Mammary epithelial cell (primary cell): ENCODE measurements at regions of chr18 and their contacts with region 1.

Region 1: DNA sequence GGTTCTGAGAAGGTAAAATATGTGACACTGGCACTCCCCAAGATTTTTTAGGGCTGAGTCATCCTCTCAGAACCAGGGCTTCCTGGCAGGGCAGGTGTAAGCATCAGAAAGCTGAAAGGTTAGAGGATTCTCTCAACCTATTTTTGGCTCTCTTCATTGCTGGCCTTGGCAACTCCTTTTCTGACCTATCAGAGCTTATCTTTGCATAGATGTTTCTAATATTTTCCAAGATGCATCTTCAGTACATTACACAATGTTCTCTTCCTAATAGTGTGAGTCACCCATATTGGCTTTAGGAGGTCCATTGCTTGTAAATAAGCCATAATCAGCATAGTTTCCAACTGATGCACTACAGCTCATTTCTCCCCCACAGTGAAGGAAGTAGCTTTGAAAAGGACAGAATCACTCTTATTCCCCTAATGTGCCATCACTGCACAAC is 2008.4 kb upstream of the PIK3C3 start:
- DNase-seq: peak; percentile 85
- H3K4me3 ChIP-seq: no peak overlapping the region
- H3K27ac ChIP-seq: peak overlapping the region; percentile 85
- H3K4me1 ChIP-seq: peaks cover 34% of the 10 kb centered on the region
- H3K27me3 ChIP-seq: no peaks in the 10 kb centered on the region
- CTCF ChIP-seq: no peak

Region 2: DNA sequence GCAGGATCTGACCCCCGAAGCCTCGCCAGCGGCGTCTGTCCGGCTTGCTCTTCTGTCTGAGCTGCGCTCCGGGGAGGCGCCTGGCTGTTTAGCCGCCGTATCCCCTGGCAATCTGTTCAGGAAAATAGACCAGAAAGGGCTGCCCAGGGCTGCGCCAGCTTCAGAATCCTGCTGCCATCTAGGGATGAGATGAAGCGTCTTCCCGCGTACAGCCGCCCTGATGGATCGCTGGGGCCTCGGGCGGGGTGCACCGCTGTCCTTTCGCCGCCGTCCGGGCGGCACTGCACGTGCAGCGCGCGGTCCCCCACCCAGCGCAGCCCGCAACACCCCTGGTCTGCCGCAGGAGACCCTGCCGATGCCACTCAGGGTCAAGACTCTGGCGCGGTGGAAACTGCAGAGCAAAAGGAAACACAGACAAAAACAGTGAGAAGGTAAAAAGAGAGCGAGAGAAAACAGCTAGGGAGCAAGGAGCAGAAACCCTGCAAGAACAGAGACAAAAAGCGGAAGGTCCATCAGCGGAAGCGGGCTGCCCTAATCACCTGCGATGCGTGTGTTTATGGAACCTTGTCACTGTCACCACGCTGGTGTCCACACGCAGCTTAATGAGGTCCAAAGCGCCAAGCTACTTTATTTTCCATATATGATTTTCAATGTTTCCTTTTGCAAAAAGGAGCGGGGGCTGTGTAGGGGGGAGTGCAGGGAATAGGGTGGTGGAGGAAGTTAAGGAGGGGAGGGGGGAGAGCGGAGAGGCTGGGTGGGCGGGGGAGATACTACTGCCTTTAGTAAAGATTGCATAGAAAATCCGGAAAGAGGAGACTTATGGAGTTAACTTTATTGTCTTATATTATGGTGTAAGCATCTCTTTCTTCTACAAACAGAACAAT is 104.9 kb before region 1 on chr18:
- CTCF ChIA-PET with region 1: no interaction called
- dilution Hi-C with region 1: no loop called
- in situ Hi-C with region 1: no loop called
- intact Hi-C with region 1: no loop called
- DNase-seq: peak; percentile 63
- H3K4me3 ChIP-seq: peak overlapping the region; percentile 63 to 76 (median 66)
- H3K27ac ChIP-seq: no peak overlapping the region
- H3K4me1 ChIP-seq: peaks cover 19% of the 10 kb centered on the region
- H3K27me3 ChIP-seq: peaks cover under 1% of the 10 kb centered on the region
- CTCF ChIP-seq: peak; percentile 28 to 74

Region 3: GRCh38 chr18:39960550-39960949 is 13.9 kb after region 1 on chr18:
- CTCF ChIA-PET with region 1: no interaction called
- dilution Hi-C with region 1: no loop called
- in situ Hi-C with region 1: no loop called
- intact Hi-C with region 1: loop called (anchors 1 kb)
- DNase-seq: peak; percentile 84
- H3K4me3 ChIP-seq: no peak overlapping the region
- H3K27ac ChIP-seq: peak overlapping the region; percentile 91
- H3K4me1 ChIP-seq: peaks cover 40% of the 10 kb centered on the region
- H3K27me3 ChIP-seq: no peaks in the 10 kb centered on the region
- CTCF ChIP-seq: no peak

Region 4: DNA sequence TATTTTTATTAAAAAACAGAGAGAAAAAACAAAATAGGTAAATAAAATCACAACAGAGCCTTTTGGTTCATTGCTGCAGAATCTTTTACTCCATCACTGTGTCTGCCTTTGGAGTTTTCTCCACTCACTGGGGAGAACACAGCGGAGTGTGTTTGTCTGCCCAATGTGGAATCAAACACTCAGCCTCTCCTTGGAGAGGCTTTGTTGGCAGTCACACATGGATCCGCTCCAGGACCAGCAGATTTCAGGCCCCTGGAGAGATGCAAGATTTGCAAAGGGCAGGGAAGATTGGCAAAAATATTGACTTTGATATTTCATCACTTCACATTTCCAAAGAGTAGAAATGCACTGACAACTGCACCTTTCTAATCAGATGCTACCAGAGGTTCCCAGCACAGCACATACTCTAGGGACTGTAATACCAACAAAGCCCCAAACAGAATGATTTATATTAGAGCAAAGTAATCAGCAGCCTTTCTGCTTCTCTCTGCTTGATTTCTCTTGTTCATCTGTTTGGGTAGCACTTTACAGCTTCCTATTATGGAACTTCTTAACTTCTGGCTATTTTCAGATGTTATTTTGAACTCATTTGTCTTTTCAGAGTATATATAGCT is 109.5 kb after region 1 on chr18:
- CTCF ChIA-PET with region 1: no interaction called
- dilution Hi-C with region 1: no loop called
- in situ Hi-C with region 1: no loop called
- intact Hi-C with region 1: no loop called
- DNase-seq: no peak
- H3K4me3 ChIP-seq: no peak overlapping the region
- H3K27ac ChIP-seq: no peak overlapping the region
- H3K4me1 ChIP-seq: no peaks in the 10 kb centered on the region
- H3K27me3 ChIP-seq: no peaks in the 10 kb centered on the region
- CTCF ChIP-seq: no peak